ENCODE measurements at regions of chr1 and their contacts with region 1.

Region 1: DNA sequence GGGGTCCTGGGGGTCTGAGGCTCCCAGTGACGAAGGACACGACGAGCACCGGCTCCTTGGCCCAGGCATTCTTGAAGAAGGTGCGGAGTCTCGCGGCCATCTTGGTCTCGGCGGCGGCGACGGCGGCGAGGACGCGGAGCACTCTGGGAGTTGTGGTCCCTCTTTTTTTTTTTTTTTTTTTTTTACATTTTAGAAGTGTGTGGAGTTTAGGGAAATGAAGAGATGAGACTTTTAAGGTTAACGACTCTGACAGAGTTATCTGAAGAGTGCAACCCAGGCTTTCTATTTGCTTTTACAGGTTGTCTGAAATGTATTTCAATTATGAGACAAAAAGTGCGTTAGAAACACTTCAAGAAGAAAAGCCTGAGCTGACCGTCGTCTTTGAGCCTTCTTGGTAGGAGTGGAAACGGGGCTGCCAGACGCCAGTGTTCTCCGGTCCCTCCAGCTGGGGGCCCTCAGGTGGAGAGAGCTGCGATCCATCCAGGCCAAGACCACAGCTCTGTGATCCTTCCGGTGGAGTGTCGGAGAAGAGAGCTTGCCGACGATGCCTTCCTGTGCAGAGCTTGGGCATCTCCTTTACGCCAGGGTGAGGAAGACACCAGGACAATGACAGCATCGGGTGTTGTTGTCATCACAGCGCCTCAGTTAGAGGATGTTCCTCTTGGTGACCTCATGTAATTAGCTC is 9.7 kb downstream of the OR2B11 start:
- DNase-seq: peak; percentile 71
- ATAC-seq: peak; percentile 85
- H3K4me3 ChIP-seq: peak overlapping the region; percentile 64
- H3K27ac ChIP-seq: no peak overlapping the region
- H3K4me1 ChIP-seq: peaks cover 6% of the 10 kb centered on the region; the same call in 1 of the 2 replicates
- H3K27me3 ChIP-seq: peaks cover 20% of the 10 kb centered on the region
- CTCF ChIP-seq: 0 out of 2 replicates have a peak, but pooled peaks have one; percentile 39

Region 2: GRCh38 chr1:247294282-247294681 is 154.0 kb before region 1 on chr1:
- CTCF ChIA-PET with region 1: no interaction called
- POLR2A ChIA-PET with region 1: no interaction called
- intact Hi-C with region 1: no loop called
- DNase-seq: peak; percentile 26
- ATAC-seq: no peak
- H3K4me3 ChIP-seq: no peak overlapping the region
- H3K27ac ChIP-seq: no peak overlapping the region
- H3K4me1 ChIP-seq: no peaks in the 10 kb centered on the region
- H3K27me3 ChIP-seq: no peaks in the 10 kb centered on the region
- CTCF ChIP-seq: no peak

Region 3: GRCh38 chr1:247373721-247374141 is 74.5 kb before region 1 on chr1:
- CTCF ChIA-PET with region 1: interaction called, 10 read pairs
- POLR2A ChIA-PET with region 1: no interaction called
- intact Hi-C with region 1: no loop called
- DNase-seq: no peak
- ATAC-seq: no peak
- H3K4me3 ChIP-seq: no peak overlapping the region
- H3K27ac ChIP-seq: no peak overlapping the region
- H3K4me1 ChIP-seq: peaks cover 5% of the 10 kb centered on the region; the same call in 1 of the 2 replicates
- H3K27me3 ChIP-seq: no peaks in the 10 kb centered on the region
- CTCF ChIP-seq: peak; percentile 40

Region 4: GRCh38 chr1:247401310-247402119 is 46.7 kb before region 1 on chr1:
- CTCF ChIA-PET with region 1: interaction called, 5 read pairs
- POLR2A ChIA-PET with region 1: no interaction called
- intact Hi-C with region 1: loop called (anchors 1 kb)
- DNase-seq: peak; percentile 98
- ATAC-seq: peak; percentile 78
- H3K4me3 ChIP-seq: peak overlapping the region; percentile 25
- H3K27ac ChIP-seq: peak overlapping the region; percentile 81
- H3K4me1 ChIP-seq: peaks cover 31% of the 10 kb centered on the region
- H3K27me3 ChIP-seq: no peaks in the 10 kb centered on the region
- CTCF ChIP-seq: no peak

Region 5: GRCh38 chr1:247415423-247416361 is 32.6 kb before region 1 on chr1 and contains the start of gene NLRP3:
- CTCF ChIA-PET with region 1: no interaction called
- POLR2A ChIA-PET with region 1: no interaction called
- intact Hi-C with region 1: no loop called
- DNase-seq: peak; percentile 73
- ATAC-seq: peak; percentile 56
- H3K4me3 ChIP-seq: no peak within 1 kb of the TSS
- H3K27ac ChIP-seq: no peak within 1 kb of the TSS
- H3K4me1 ChIP-seq: peaks cover 13% of the 10 kb centered on the region
- H3K27me3 ChIP-seq: peaks cover 4% of the 10 kb centered on the region; the same call in 1 of the 2 replicates
- CTCF ChIP-seq: no peak
- total RNA-seq, gene NLRP3: 0.35 and 0.40 TPM in 2 replicates

Measured in PC-3 (cell line).